AG04449 (cell line): ENCODE measurements at regions of chr6 and their contacts with region 1.

Region 1: GRCh38 chr6:30130887-30131862 is 4.8 kb upstream of the TRIM40 start:
- DNase-seq: peak; percentile 51
- H3K4me3 ChIP-seq: no peak overlapping the region
- CTCF ChIP-seq: peak; percentile 98

Region 2: GRCh38 chr6:29847871-29848630 is 283.1 kb before region 1 on chr6:
- CTCF ChIA-PET with region 1: interaction called, 42 read pairs
- POLR2A ChIA-PET with region 1: no interaction called
- DNase-seq: no peak
- H3K4me3 ChIP-seq: no peak overlapping the region
- CTCF ChIP-seq: peak; percentile 91

Region 3: DNA sequence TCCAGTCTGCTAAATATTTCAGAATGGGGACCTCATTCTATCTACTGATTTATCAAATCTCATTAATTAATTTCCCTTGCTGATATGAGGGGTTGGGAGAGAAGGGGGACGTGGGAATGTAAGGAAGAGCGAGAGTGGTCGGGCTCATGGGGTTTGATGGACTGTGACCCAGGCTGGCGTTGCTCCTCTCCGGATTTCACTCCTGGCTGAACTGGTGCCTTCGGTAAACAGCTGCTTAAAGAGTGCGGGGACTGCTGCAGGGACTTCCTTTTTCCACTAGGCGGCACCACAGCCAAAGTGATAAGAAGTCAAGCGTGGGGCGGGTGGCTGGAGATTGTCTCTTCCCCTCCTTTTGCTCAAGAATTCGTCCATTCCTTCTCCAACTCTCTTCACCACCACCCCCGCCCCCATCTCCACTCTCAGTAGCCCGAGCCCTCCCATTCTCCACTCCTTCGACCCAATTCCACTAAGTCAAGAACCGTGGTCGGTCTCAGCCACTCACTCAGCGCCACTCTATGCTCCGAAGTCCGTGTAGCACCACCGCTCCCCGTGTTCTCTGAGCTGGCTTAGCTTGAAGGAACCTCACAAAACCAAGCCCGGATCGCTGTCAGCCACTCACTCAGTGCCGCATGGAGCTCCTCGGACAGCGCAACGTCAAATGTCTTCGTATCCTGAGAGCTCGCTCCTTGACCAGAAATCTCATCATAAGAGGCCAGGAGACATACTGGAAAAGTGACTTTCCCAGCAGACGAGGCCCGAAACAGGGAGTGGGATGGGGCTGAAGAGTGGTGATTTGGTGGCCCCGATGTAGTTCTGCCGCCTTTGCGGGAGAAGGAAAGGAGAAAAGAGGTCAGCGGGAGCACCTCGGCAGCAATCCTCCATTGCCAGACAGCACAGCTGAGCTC is 28.0 kb before region 1 on chr6:
- CTCF ChIA-PET with region 1: interaction called, 444 read pairs
- POLR2A ChIA-PET with region 1: no interaction called
- DNase-seq: peak; percentile 45
- H3K4me3 ChIP-seq: peak overlapping the region; percentile 56
- CTCF ChIP-seq: peak; percentile 86

Region 4: DNA sequence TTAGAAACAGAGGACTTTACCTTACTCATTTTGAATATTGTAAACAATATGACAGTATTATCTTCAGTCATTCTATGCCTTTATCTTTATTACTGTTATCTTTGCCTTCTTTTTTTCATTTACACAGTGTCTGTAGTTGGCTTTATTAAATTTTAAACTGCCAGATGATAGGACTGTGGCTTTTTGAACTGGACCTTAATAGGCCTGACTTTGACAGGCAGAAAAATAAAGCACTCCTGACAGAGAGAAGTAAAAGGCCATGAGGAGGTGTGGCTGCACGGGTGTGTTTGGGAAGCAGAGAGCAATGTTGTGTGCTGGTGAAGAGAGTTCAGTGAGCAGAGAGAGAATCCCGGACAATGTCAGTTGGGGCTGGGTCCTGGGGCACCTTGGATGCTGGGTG is 12.6 kb after region 1 on chr6:
- CTCF ChIA-PET with region 1: interaction called, 33 read pairs
- POLR2A ChIA-PET with region 1: no interaction called
- DNase-seq: no peak
- H3K4me3 ChIP-seq: no peak overlapping the region
- CTCF ChIP-seq: no peak

Region 5: GRCh38 chr6:30149231-30149630 is 18.1 kb after region 1 on chr6:
- CTCF ChIA-PET with region 1: interaction called, 56 read pairs
- POLR2A ChIA-PET with region 1: no interaction called
- DNase-seq: no peak
- H3K4me3 ChIP-seq: no peak overlapping the region
- CTCF ChIP-seq: no peak

Region 6: DNA sequence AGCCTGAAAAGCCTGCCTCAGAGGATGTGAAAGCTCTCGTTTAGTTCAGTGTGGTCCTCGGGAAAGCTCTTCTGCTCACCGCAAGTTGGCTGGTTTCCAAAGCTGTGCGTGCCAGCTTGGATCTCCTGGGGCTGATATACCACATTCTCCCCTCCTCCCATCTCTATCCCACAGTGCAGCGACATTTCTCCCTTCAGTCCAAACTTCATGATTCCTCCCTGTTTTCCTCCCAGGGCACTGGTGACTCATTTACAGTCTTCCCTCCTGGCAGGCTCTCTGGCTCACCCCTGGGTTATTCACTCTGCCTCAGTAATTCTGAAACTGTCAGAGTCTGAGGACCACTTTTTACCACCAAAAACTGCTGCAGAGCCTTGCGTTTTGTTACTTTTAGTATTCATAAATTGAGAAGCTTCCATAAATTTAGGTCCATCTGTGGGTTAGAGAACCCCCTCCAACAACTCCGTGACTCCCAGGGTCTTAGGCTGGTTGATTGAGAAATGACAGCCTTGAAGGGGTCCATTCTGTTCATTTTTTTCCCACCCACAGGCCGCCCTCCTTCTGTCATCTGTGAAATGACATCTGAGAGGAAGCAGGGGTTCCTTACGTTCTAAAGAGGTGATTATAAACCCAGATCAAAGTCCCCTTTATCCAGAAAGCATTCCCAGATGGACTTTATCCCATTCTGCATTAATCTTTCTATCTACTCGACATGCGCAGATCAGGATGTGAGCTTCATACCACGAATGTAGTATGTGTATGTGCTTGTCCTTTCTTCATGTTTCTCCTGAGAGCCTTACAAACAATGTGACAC is 23.7 kb after region 1 on chr6:
- CTCF ChIA-PET with region 1: interaction called, 56 read pairs
- POLR2A ChIA-PET with region 1: no interaction called
- DNase-seq: peak; percentile 72
- H3K4me3 ChIP-seq: no peak overlapping the region
- CTCF ChIP-seq: no peak

Region 7: DNA sequence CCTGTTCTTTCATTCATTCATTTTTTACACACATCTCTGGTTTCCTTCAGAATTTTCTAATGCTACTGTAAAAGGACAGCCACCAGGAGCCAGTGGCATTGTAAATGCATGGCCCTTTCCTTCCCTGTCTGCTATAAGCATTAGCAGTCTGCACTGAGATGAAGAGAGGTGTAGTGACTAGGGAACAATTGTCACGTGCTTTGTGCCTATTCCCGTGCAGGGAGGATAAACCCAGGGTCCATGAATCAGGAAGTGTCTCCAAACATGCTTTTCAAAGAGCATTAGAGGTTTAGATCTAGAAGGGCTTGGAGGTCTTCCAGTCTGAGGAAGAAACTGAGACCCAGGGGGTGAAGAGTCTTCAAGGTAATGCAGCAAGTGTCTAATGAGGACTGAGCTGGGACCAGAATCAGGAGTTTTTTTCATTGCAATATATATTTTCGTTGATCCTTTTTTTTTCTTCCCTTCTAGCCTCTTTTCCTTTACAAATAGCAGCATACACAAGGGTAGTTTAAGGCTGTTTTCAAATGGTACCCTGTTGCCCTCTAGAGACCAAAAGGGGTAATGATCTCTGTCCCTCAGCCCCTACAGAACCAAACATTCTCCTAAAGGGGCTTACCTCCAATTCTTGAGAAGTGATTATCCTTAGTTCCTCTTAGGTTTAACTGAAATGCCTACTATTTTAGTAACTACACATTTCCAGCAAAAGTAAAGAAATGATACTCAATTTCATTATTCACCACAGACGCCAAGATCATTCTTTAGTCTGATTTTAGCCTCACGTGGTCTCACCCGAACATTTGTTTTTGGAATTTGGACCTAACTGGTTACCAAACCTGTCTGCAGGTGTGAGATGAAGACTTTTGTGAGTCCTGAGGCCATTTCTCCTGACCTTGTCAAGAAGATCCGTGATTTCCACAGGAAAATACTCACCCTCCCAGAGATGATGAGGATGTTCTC is 38.8 kb after region 1 on chr6:
- CTCF ChIA-PET with region 1: interaction called, 18 read pairs
- POLR2A ChIA-PET with region 1: no interaction called
- DNase-seq: peak; percentile 14
- H3K4me3 ChIP-seq: no peak overlapping the region
- CTCF ChIP-seq: peak; percentile 67